Endothelial cell of umbilical vein (primary cell): ENCODE measurements at regions of chr4 and their contacts with region 1.

Region 1: DNA sequence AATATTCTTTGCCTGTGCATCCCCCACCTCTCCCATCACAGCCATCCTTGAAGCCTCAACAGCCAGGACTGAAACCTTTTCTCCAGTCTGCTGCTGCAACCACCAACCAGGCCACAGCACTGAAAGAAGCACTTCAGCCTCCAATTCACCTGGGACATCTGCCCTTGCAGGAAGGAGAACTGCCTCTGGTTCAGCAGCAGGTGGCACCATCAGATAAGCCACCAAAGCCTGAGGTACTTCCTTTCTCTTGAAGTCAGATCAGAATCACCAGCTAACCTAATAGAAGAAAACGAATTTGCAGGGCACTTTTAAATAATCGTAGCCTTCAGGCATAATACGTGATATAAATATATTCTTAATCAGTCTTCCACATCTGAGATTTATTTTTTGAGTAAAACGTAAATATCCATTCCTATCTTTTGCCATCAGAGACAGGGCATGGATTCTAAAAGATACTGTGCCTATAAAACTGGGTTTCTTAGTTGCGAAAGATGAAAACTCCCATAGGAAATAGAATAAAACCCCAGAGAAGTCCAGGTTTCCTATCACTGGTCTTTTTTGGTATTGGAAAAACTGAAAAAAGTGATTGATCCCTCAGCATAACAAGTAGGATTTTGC is 9.5 kb downstream of the AMBN start:
- DNase-seq: peak; percentile 56
- H3K4me3 ChIP-seq: no peak overlapping the region
- H3K27ac ChIP-seq: no peak overlapping the region
- H3K4me1 ChIP-seq: no peaks in the 10 kb centered on the region
- H3K27me3 ChIP-seq: peaks cover 3 to 6% of the 10 kb centered on the region in 2 experiments
- CTCF ChIP-seq: peak; percentile 66
- POLR2A ChIP-seq: no peak

Region 2: DNA sequence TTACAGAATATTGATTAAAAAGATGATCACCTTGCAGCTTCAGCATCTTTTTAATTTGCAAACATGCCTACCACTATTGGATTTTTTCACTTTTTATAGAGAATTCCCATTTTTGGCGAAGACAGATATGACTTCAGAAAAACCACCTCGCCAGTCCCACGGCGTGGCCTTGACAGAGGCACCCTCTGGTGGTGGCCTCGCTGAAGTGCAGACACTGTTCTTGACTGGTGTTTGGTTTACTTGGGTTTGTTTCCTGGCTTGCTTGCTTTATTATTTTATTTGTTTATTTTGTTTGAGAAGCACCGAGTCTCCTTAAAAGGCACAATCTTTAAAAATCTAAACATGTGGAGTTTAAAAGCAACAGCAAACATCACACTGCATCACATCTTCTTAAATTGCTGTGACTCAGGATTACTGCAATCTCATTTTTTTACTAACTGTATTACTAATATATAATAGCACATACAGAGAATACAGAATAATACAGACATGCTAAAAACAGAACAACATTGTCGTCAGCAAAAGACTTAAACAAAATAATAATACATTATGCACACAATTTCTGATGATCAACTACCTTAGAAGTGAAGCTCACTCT is 96.3 kb before region 1 on chr4:
- CTCF ChIA-PET with region 1: no interaction called
- POLR2A ChIA-PET with region 1: no interaction called
- dilution Hi-C with region 1: no loop called
- intact Hi-C with region 1: no loop called
- DNase-seq: peak; percentile 54
- H3K4me3 ChIP-seq: no peak overlapping the region
- H3K27ac ChIP-seq: no peak overlapping the region
- H3K4me1 ChIP-seq: no peaks in the 10 kb centered on the region
- H3K27me3 ChIP-seq: peaks cover 0 to 1% of the 10 kb centered on the region in 2 experiments
- CTCF ChIP-seq: peak; percentile 90 to 94
- POLR2A ChIP-seq: no peak

Region 3: GRCh38 chr4:70613306-70614183 is 12.0 kb after region 1 on chr4:
- CTCF ChIA-PET with region 1: interaction called, 16 read pairs
- POLR2A ChIA-PET with region 1: no interaction called
- dilution Hi-C with region 1: no loop called
- intact Hi-C with region 1: no loop called
- DNase-seq: no peak
- H3K4me3 ChIP-seq: no peak overlapping the region
- H3K27ac ChIP-seq: no peak overlapping the region
- H3K4me1 ChIP-seq: no peaks in the 10 kb centered on the region
- H3K27me3 ChIP-seq: peaks cover 9 to 31% of the 10 kb centered on the region in 2 experiments
- CTCF ChIP-seq: no peak
- POLR2A ChIP-seq: no peak

Region 4: DNA sequence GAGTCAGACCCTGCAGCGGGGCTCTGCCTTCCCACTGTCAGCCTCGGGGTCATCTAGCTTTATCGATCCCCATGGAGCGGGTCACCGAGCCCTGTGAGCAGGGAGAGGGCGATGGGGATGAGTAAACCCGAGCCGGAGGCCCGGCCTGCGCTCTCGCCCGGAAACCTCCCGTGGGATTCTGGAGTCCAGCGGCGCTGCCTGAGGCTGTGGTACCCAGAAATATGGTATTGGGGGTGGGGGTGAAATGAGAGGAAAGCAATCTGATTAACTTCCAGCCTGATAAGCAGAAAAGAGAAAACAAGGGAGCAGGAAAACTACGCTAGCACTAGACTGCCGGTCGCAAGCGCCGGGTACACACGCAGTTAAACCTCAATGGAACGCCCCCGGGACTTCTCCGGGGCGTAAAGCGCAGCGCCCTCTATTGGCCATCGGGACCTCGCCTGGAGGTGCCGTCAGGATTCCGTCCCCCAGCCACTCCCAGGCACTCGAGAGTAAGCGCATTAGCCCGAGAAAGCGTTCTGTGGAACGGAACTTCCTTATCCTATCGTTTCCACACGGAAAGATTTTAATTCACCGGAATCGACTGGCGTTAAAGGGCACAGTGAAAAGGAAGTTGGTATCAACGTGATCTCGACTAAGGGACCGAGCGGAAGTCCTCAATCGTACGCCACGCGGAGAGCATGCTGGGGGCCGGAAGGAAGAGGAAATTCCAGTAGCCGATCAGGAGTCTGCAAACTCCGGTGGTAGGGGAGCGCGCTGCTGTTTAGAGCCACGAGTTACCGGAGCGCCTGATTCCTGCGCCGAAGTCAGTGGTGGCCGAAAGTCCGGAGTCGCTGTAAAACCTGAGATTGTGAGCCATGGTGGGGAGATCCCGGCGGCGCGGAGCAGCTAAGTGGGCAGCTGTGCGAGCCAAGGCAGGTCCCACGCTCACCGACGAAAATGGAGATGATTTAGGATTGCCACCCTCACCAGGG is 86.6 kb after region 1 on chr4 and contains the start of gene UTP3:
- CTCF ChIA-PET with region 1: interaction called, 3 read pairs
- POLR2A ChIA-PET with region 1: no interaction called
- dilution Hi-C with region 1: no loop called
- intact Hi-C with region 1: loop called (anchors 1 kb)
- DNase-seq: peak; percentile 98
- H3K4me3 ChIP-seq: peak within 1 kb of the TSS; percentile 34 to 72 (median 62)
- H3K27ac ChIP-seq: peak within 1 kb of the TSS; percentile 36
- H3K4me1 ChIP-seq: peaks cover 22% of the 10 kb centered on the region
- H3K27me3 ChIP-seq: no peaks in the 10 kb centered on the region
- CTCF ChIP-seq: peak; percentile 96 to 99
- POLR2A ChIP-seq: peak; percentile 83
- total RNA-seq, gene UTP3: 32.8 and 34.7 TPM in 2 replicates

Region 5: GRCh38 chr4:71009890-71010588 is 408.5 kb after region 1 on chr4:
- CTCF ChIA-PET with region 1: interaction called, 30 read pairs
- POLR2A ChIA-PET with region 1: no interaction called
- dilution Hi-C with region 1: no loop called
- intact Hi-C with region 1: loop called (anchors 2 kb)
- DNase-seq: peak; percentile 67
- H3K4me3 ChIP-seq: no peak overlapping the region
- H3K27ac ChIP-seq: no peak overlapping the region
- H3K4me1 ChIP-seq: peaks cover 2% of the 10 kb centered on the region
- H3K27me3 ChIP-seq: no peaks in the 10 kb centered on the region
- CTCF ChIP-seq: peak; percentile 46 to 47
- POLR2A ChIP-seq: no peak

Region 6: DNA sequence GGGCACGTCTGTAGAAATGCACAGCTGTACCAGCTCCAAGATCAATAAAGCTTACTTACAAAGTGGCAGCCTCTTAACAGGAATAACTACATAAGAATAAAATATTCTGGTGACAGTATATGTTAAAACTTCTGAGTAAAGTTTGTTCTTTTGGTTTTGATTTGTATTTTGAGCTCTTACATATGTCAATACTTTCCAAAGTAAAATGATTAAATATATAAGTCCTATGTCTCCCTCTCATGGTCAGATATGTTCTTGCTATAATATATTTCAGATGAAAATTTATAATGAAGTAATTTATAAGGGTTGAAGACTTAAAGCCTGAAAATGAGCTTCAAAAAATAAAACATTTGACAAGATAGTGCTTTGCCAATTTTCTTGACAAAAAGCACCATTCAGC is 1684.7 kb after region 1 on chr4:
- CTCF ChIA-PET with region 1: interaction called, 13 read pairs
- POLR2A ChIA-PET with region 1: no interaction called
- dilution Hi-C with region 1: no loop called
- intact Hi-C with region 1: no loop called
- DNase-seq: peak; percentile 10
- H3K4me3 ChIP-seq: no peak overlapping the region
- H3K27ac ChIP-seq: no peak overlapping the region
- H3K4me1 ChIP-seq: no peaks in the 10 kb centered on the region
- H3K27me3 ChIP-seq: no peaks in the 10 kb centered on the region
- CTCF ChIP-seq: no peak
- POLR2A ChIP-seq: no peak